Lower leg skin (tissue), 4 donors: ENCODE measurements at regions of chr2 and their contacts with region 1.

Region 1: DNA sequence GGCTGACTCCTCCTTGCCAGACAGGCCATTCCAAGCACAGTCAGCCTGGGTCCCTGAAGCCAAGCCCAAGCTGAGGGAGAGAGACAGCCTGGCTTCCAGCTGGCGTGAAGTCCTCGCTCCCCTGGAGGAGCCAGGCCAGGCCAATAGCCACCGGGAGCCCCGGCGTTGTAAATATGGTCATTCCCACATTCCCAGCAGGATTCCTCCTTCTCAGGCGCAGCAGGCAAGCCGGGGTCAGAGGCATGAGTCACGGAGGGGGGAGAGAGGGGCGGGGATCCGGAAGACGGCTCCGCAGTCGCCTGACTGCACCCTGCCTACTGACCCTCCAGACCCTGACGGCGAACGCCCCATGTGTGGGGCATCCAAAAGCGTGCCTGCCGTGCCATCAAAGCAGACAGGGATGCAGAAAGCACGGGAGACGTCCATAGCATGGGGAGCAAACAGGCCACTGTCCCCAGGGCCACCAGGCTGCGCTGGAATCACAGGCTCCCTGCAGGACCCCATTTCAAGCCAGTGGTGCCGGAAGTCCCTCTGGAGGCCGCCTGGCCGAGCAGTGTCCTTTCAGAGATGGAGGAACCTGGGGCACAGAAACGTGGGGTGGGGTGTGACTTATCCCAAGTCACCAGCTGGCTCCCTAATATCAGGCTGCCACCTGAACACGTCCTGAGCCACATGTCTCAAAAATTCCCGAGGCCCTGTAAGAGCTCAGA is 48.2 kb downstream of the TWIST2 start:
- DNase-seq: peak; percentile 62 to 91
- H3K4me3 ChIP-seq: no peak overlapping the region
- CTCF ChIP-seq: no peak
- POLR2A ChIP-seq: no peak

Region 2: DNA sequence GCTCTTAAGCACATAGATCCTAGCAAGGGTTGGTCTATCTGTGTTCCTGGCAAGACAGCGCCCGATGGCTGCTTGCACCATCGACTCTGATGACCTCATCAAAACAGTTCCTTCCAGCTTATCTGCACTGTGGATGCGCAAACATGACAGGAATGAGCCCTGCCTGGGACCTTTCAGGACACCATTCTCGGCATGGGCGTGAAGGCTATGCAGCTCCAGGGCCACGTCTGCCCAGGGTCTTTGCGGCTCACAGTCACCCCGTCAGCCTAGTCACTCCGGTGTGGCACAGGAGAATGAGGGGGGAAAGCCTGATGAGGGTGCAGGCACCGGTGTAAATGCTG is 196.0 kb before region 1 on chr2:
- intact Hi-C with region 1: no loop called
- DNase-seq: peak; percentile 13 to 82
- H3K4me3 ChIP-seq: no peak overlapping the region
- CTCF ChIP-seq: no peak
- POLR2A ChIP-seq: no peak

Region 3: DNA sequence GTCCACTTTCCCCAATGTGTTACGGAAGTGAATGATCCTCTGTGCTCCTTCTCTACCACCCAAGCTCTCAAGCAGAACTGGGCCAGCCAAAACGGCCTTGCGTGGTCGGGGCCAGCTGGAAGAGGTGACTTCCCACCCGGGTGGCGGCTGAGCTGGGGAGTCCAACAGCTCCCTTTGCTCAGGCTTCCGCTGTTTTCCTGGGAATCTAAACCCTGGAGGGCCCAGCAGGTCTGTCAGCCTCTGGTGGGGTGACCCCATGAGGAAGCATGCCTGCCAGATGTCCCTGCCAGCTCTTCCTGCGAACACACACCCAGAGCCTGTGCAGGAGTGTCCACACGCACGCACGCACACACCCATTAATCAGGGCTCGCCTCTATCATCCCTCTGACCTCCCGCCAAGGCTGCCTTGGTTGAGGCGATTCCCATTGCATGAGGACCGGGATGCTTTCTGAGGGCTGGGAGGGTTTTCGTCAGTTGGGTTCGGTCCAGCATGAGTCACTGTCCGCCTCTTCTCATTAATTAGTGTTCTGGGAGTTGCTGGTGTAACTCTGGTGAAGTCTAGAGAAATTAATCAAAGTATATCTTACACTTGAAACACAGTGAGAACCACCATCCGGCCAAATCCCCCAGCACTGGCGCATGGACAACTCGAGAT is 42.5 kb after region 1 on chr2:
- intact Hi-C with region 1: loop called (anchors 2 kb)
- DNase-seq: peak; percentile 88 to 97
- H3K4me3 ChIP-seq: no peak overlapping the region
- CTCF ChIP-seq: no peak
- POLR2A ChIP-seq: no peak

Region 4: DNA sequence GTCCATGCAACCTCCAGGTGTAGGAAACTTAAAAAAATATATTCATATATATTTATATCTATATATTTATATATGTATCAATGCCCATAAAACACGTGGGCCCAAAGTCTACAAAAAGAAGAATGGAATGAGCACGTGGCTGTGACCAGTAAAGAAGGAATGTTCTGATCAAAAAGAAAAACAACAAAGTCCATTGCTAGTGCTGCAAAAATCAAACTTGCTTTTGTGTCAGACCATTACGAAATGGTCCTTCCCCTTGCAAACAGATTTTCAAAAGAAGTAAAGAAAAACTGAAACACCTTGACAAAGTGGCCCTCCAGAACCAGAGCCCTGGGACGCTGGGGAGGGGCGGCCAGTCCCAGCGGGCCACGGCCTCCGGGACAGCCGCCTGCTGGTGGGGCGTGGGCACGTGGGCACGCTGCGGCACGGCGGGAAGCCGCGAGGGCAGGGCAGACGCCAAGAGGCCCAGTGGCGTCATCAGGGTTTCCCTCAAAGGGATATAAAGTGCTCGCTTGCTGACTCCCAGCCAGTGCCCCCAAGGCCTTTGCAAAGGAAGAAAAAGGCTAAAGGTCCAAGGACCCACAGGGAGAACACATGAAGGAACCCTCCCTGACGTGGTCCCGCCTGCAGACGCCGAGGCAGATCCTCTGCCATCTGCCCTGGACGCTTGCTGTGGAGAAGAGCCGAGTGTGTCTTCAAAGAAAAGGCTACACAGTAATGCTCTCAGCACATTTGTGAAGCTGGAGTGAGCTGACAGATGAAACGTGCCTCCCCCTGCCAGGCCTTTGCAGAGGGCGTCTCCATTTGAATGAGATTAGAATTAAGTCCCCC is 153.6 kb after region 1 on chr2:
- intact Hi-C with region 1: no loop called
- DNase-seq: no peak
- H3K4me3 ChIP-seq: no peak overlapping the region
- CTCF ChIP-seq: no peak
- POLR2A ChIP-seq: no peak